ENCODE measurements at regions of chr15 and their contacts with region 1.

Region 1: DNA sequence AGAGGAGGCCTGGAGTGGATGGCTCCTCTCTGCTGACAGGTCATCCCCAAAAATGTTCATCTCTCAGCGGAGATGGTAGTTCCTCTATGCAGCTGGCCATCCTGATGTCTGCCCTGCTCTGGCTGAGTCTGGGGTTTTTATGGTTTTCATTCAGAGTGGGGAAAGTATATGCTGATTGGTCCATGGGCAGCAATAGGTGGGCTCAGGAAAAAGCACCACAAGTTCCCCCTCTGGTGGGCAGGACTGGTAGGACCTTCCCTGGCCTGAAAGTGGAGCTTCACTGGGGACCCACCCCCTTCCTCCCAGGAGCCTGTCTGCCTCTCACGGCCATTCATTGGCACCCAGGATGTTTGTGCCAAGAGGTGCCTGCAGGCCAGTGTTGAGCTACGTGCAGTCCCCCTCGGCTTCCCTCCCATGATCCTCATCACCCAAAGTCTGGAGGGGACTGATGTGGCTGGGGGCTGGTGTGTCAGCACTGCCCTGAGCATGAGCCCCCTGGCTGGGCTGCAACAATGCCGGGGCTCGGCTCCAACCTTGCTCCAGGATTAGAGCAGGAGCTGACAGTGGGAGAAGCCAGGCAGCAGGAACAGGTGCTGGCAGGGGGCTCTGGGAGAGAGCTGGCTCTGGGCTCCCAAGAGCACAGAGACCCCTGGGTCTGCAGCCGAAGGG is 13.1 kb upstream of the BLOC1S6 start:
- DNase-seq: no peak
- ATAC-seq: peak; percentile 73
- H3K4me3 ChIP-seq: no peak overlapping the region
- H3K27ac ChIP-seq: no peak overlapping the region
- H3K4me1 ChIP-seq: no peaks in the 10 kb centered on the region
- H3K27me3 ChIP-seq: no peaks in the 10 kb centered on the region
- CTCF ChIP-seq: peak; percentile 31; the same call in 1 of the 2 replicates

Region 2: GRCh38 chr15:44738340-44738984 is 835.6 kb before region 1 on chr15:
- CTCF ChIA-PET with region 1: no interaction called
- POLR2A ChIA-PET with region 1: no interaction called
- in situ Hi-C with region 1: no loop called
- intact Hi-C with region 1: no loop called
- DNase-seq: no peak
- ATAC-seq: no peak
- H3K4me3 ChIP-seq: no peak overlapping the region
- H3K27ac ChIP-seq: no peak overlapping the region
- H3K4me1 ChIP-seq: peaks cover 19% of the 10 kb centered on the region
- H3K27me3 ChIP-seq: no peaks in the 10 kb centered on the region
- CTCF ChIP-seq: peak; percentile 83

Region 3: GRCh38 chr15:45242289-45242688 is 331.8 kb before region 1 on chr15:
- CTCF ChIA-PET with region 1: interaction called, 10 read pairs
- POLR2A ChIA-PET with region 1: no interaction called
- in situ Hi-C with region 1: no loop called
- intact Hi-C with region 1: no loop called
- DNase-seq: no peak
- ATAC-seq: no peak
- H3K4me3 ChIP-seq: no peak overlapping the region
- H3K27ac ChIP-seq: no peak overlapping the region
- H3K4me1 ChIP-seq: no peaks in the 10 kb centered on the region
- H3K27me3 ChIP-seq: no peaks in the 10 kb centered on the region
- CTCF ChIP-seq: no peak

Region 4: GRCh38 chr15:45510758-45511280 is 63.3 kb before region 1 on chr15:
- CTCF ChIA-PET with region 1: no interaction called
- POLR2A ChIA-PET with region 1: interaction called, 12 read pairs
- in situ Hi-C with region 1: no loop called
- intact Hi-C with region 1: no loop called
- DNase-seq: no peak
- ATAC-seq: no peak
- H3K4me3 ChIP-seq: no peak overlapping the region
- H3K27ac ChIP-seq: no peak overlapping the region
- H3K4me1 ChIP-seq: no peaks in the 10 kb centered on the region
- H3K27me3 ChIP-seq: no peaks in the 10 kb centered on the region
- CTCF ChIP-seq: no peak

Measured in Panc1 (cell line).